ENCODE measurements at regions of chr2 and their contacts with region 1.

Region 1: GRCh38 chr2:120312861-120313694 is 32.9 kb upstream of the INHBB start:
- DNase-seq: peak; percentile 72 to 85 (median 76)
- ATAC-seq: peak; percentile 92
- H3K4me3 ChIP-seq: no peak overlapping the region
- H3K27ac ChIP-seq: no peak overlapping the region
- H3K4me1 ChIP-seq: peaks cover 0 to 6% of the 10 kb centered on the region in 2 experiments; a peak in 2 of 5 replicates
- H3K27me3 ChIP-seq: peaks cover 29 to 62% of the 10 kb centered on the region in 2 experiments
- CTCF ChIP-seq: peak; percentile 92 to 98 (median 97)
- EP300 ChIP-seq: no peak
- POLR2A ChIP-seq: no peak
- RAD21 ChIP-seq: peak; percentile 95 to 96

Region 2: DNA sequence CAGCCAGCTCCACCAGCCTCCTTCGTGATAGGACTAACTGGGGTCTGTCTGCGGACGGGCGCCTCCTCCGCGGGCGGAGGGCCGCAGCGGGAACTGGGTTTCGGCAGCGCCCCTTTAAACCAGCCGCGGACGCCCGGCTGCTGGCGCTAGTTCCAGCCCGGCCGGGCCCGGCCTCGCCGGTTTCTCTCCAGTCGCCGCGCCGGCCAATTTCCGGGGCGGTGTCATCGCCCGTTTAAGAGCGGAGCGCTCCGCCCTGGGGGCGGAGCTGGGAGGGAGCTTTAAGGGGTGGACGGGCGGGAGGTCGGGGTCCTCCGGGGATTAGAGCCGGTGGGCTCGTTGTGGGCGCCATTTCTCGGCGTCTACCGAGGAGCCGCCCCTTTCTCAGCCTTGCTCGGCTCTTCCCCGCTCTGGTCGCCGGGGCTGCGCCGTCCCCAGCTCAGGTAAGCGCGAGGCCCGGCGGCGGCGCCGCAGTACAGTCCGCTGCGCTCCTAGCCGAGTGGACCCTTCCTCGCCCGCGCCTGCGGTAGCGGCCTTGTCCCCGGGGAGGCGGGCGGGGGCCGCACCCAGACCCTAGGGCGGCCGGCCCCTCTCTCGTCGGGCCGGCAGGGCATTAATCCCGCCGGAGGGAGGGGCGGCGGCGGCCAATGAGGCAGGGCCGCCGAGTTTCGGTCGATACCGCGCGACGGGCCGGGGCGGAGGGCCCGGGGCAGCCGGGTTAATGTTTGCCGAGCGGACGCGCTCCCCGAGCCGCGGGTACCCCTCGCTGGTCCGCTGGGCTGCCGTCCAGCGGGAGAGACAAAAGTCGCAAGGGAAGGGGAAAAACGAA is 300.1 kb before region 1 on chr2 and contains the start of gene EPB41L5:
- CTCF ChIA-PET with region 1: no interaction called
- POLR2A ChIA-PET with region 1: no interaction called
- in situ Hi-C with region 1: no loop called
- intact Hi-C with region 1: loop called (anchors 10 kb)
- DNase-seq: peak; percentile 82 to 95 (median 88)
- ATAC-seq: peak; percentile 92
- H3K4me3 ChIP-seq: peak within 1 kb of the TSS; percentile 84
- H3K27ac ChIP-seq: peak within 1 kb of the TSS; percentile 71
- H3K4me1 ChIP-seq: peaks cover 2 to 15% of the 10 kb centered on the region in 2 experiments; a peak in 3 of 5 replicates
- H3K27me3 ChIP-seq: no peaks in the 10 kb centered on the region
- CTCF ChIP-seq: no peak
- EP300 ChIP-seq: no peak
- POLR2A ChIP-seq: peak; percentile 65
- RAD21 ChIP-seq: no peak
- polyA plus RNA-seq, gene EPB41L5: 2.3 to 3.0 TPM

Region 3: GRCh38 chr2:120109186-120110061 is 203.7 kb before region 1 on chr2:
- CTCF ChIA-PET with region 1: interaction called, 7 read pairs
- POLR2A ChIA-PET with region 1: interaction called, 3 read pairs
- in situ Hi-C with region 1: loop called (anchors 10 kb)
- intact Hi-C with region 1: loop called (anchors 5 kb)
- DNase-seq: peak; percentile 8 to 23 (median 14)
- ATAC-seq: peak; percentile 86
- H3K4me3 ChIP-seq: no peak overlapping the region
- H3K27ac ChIP-seq: no peak overlapping the region
- H3K4me1 ChIP-seq: no peaks in the 10 kb centered on the region; a peak in 1 of 5 replicates
- H3K27me3 ChIP-seq: 0 out of 5 replicates have a peak, but pooled peaks cover 0 to 2% of the 10 kb centered on the region in 2 experiments
- CTCF ChIP-seq: peak; percentile 40 to 71 (median 49); a peak in 4 of 6 replicates
- EP300 ChIP-seq: no peak
- POLR2A ChIP-seq: no peak
- RAD21 ChIP-seq: peak; percentile 56 to 78

Region 4: DNA sequence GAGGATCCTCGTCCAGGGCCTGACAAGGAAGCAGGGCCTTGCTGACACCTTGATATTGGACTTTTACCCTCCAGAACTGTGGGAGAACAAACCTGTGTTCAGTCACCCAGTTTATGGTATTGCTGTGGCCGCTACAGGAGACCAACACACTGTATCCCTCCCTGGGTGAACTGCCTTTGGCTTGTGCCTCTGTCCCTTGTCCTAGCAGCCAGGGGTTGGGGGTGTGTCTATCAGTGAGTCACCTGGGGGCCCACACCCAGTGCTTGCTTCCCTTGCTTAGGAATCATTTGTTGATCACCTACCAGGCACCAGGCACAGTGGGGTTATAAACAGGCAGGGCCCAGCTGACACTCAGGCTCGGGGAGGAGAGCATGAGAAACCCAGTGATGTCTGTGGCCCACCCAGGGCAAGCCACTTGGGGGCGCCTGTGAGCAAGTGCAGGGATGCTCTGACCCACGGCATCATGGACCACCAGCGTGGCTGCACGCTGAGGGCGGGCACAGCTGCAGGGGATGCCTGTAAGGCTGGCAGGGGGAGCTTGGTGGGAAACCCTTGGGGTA is 107.0 kb before region 1 on chr2:
- CTCF ChIA-PET with region 1: interaction called, 6 read pairs
- POLR2A ChIA-PET with region 1: interaction called, 3 read pairs
- in situ Hi-C with region 1: no loop called
- intact Hi-C with region 1: loop called (anchors 1 kb)
- DNase-seq: peak; percentile 56 to 62 (median 58)
- ATAC-seq: peak; percentile 86
- H3K4me3 ChIP-seq: no peak overlapping the region
- H3K27ac ChIP-seq: no peak overlapping the region
- H3K4me1 ChIP-seq: peaks cover 0 to 9% of the 10 kb centered on the region in 2 experiments; a peak in 2 of 5 replicates
- H3K27me3 ChIP-seq: peaks cover 2 to 20% of the 10 kb centered on the region in 2 experiments; a peak in 4 of 5 replicates
- CTCF ChIP-seq: peak; percentile 72 to 85 (median 76)
- EP300 ChIP-seq: no peak
- POLR2A ChIP-seq: no peak
- RAD21 ChIP-seq: peak; percentile 38 to 73; a peak in 3 of 4 replicates

Region 5: GRCh38 chr2:120252225-120253021 is 60.7 kb before region 1 on chr2 and contains the start of gene RALB:
- CTCF ChIA-PET with region 1: interaction called, 4 read pairs
- POLR2A ChIA-PET with region 1: interaction called, 3 read pairs
- in situ Hi-C with region 1: no loop called
- intact Hi-C with region 1: loop called (anchors 2 kb)
- DNase-seq: peak; percentile 96 to 99 (median 98)
- ATAC-seq: peak; percentile 93
- H3K4me3 ChIP-seq: peak within 1 kb of the TSS; percentile 76
- H3K27ac ChIP-seq: peak within 1 kb of the TSS; percentile 75
- H3K4me1 ChIP-seq: peaks cover 23 to 25% of the 10 kb centered on the region in 2 experiments
- H3K27me3 ChIP-seq: peaks cover 0 to 6% of the 10 kb centered on the region in 2 experiments; a peak in 3 of 5 replicates
- CTCF ChIP-seq: no peak
- EP300 ChIP-seq: no peak; the same call in 1 of the 2 replicates
- POLR2A ChIP-seq: peak; percentile 64; the same call in 1 of the 2 replicates
- RAD21 ChIP-seq: 0 out of 4 replicates have a peak, but pooled peaks of 1 of the 2 experiments have one; percentile 5
- polyA plus RNA-seq, gene RALB: 14.8 to 29.9 TPM

Region 6: DNA sequence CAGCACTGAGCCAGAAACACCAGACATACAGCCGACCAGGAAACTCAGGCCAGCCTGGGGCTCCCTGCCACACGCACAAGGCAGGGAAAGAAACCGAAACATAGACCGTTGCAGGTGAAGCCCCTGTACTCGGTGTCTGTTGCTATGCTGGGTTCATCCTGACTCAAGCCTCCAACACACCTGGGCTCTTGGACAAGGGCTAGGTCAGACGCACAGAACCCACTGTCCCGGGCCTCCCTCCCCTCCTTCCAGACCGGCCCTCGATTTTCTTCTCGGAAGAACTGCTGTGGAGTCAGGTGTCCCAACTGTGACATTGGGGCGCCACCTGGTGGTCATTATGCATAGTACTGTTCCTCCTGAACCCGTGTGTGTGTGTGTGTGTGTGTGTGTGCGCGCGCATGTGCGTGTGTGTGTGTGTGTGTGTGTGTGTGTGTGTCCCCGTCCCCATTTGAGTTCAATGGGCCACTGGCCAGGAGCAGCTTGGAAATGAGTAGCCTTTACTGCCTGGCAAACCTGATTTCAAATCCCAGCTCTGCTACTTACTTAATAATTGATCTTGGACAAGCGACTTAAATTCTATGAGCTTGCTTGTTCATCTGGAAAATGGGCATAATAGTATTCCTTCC is 367.2 kb after region 1 on chr2:
- CTCF ChIA-PET with region 1: interaction called, 4 read pairs
- POLR2A ChIA-PET with region 1: no interaction called
- in situ Hi-C with region 1: no loop called
- intact Hi-C with region 1: loop called (anchors 10 kb)
- DNase-seq: peak; percentile 71 to 86 (median 78)
- ATAC-seq: peak; percentile 96
- H3K4me3 ChIP-seq: no peak overlapping the region
- H3K27ac ChIP-seq: no peak overlapping the region
- H3K4me1 ChIP-seq: peaks cover 0 to 5% of the 10 kb centered on the region in 2 experiments; a peak in 2 of 5 replicates
- H3K27me3 ChIP-seq: peaks cover 2 to 20% of the 10 kb centered on the region in 2 experiments; a peak in 3 of 5 replicates
- CTCF ChIP-seq: peak; percentile 74 to 78 (median 75)
- EP300 ChIP-seq: no peak
- POLR2A ChIP-seq: no peak
- RAD21 ChIP-seq: peak; percentile 73 to 87